IMR-90 (cell line): ENCODE measurements at regions of chr6 and their contacts with region 1.

Region 1: DNA sequence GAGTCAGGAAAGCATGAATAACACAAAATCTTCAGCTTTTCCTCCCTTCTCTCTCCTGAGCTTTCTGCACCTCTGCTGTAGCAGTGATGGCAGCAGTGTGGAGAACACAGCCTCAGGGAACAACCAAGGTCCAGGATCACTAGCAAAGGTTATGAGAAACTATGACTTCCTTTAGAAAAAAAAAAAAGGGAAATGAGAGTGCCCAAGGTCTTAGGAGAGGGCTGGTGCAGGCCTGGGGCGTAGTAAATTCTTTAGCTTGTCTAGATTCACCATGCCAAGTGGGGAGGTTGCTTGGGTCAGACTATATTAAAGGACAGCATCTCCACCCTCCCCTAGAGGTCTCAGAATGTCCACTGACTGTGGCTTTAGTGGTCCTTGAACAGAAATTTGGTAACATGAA is 40.4 kb upstream of the POLR1H start:
- DNase-seq: no peak
- ATAC-seq: no peak
- H3K4me3 ChIP-seq: no peak overlapping the region
- H3K27ac ChIP-seq: no peak overlapping the region
- H3K4me1 ChIP-seq: no peaks in the 10 kb centered on the region
- H3K27me3 ChIP-seq: no peaks in the 10 kb centered on the region
- CTCF ChIP-seq: no peak
- POLR2A ChIP-seq: no peak
- RAD21 ChIP-seq: no peak

Region 2: DNA sequence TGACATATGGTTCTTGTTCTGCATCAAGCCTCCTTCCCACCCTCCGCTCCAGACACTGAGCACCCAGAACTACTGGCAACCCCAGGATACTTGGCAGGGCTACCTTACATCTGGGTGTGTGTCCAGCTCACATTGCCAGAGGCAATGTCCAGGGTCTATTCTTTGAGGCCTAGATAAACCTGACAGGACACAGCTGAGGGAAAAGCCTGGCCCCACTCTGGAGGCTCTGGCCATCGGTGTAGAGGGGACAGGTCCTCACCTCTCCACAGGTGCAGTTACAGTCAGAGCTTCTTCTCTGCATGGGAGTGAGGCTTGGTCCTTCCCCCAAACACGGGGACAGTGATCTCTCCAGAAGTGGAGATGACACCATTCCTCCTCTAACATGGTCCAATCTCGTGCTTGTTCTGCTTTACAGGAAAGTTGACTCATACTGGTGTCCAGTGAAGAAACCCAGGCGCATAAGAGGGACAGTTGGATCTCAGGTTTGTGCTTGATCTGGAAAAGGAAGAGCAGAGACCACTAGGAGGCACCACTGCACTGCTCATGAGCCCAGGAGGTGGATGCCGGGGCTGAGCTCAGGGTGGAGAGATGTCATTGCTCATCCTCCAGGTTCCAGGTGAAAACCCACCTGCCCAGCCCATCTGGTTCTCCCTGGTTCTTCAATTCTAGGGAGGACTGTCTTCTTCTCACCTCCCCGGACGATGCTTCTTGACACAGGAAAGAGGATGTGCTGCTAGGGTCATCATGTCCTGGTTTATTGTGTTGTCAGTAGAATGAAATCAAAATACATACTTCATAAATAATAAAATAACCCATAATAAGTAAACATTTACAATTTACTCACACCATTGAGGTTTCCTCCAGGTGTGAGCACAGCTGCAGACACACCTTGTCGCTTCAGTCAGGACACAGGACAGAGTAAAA is 282.7 kb before region 1 on chr6:
- CTCF ChIA-PET with region 1: no interaction called
- POLR2A ChIA-PET with region 1: no interaction called
- dilution Hi-C with region 1: no loop called
- in situ Hi-C with region 1: loop called (anchors 25 kb)
- intact Hi-C with region 1: loop called (anchors 5 kb)
- DNase-seq: peak; percentile 66
- ATAC-seq: peak; percentile 76
- H3K4me3 ChIP-seq: no peak overlapping the region
- H3K27ac ChIP-seq: no peak overlapping the region
- H3K4me1 ChIP-seq: peaks cover 5% of the 10 kb centered on the region; the same call in 1 of the 2 replicates
- H3K27me3 ChIP-seq: no peaks in the 10 kb centered on the region; the same call in 1 of the 2 replicates
- CTCF ChIP-seq: peak; percentile 71
- POLR2A ChIP-seq: no peak
- RAD21 ChIP-seq: peak; percentile 77

Region 3: DNA sequence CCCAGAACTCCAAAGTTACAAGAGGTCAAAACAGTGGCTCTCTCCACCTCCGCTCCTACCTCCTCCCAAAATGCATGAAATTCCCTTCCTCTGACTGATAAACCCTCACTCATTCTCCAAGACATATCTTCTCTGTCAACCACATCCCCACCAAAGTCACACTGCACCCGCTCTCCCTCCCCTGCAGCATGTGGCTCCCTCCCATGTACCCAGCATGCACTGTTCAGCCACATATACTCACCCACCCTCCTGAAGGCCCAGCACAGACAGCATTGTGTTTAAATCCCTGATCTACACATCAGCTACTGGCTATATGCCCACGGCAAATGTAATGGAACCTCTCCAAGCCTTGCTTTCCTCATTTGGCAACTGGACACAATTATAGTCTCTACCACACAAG is 1155.3 kb after region 1 on chr6:
- CTCF ChIA-PET with region 1: no interaction called
- POLR2A ChIA-PET with region 1: no interaction called
- dilution Hi-C with region 1: no loop called
- in situ Hi-C with region 1: no loop called
- intact Hi-C with region 1: no loop called
- DNase-seq: peak; percentile 69
- ATAC-seq: peak; percentile 83
- H3K4me3 ChIP-seq: no peak overlapping the region
- H3K27ac ChIP-seq: no peak overlapping the region
- H3K4me1 ChIP-seq: peaks cover 8% of the 10 kb centered on the region
- H3K27me3 ChIP-seq: no peaks in the 10 kb centered on the region
- CTCF ChIP-seq: no peak
- POLR2A ChIP-seq: no peak
- RAD21 ChIP-seq: no peak